ENCODE measurements at regions of chr9 and their contacts with region 1.

Region 1: DNA sequence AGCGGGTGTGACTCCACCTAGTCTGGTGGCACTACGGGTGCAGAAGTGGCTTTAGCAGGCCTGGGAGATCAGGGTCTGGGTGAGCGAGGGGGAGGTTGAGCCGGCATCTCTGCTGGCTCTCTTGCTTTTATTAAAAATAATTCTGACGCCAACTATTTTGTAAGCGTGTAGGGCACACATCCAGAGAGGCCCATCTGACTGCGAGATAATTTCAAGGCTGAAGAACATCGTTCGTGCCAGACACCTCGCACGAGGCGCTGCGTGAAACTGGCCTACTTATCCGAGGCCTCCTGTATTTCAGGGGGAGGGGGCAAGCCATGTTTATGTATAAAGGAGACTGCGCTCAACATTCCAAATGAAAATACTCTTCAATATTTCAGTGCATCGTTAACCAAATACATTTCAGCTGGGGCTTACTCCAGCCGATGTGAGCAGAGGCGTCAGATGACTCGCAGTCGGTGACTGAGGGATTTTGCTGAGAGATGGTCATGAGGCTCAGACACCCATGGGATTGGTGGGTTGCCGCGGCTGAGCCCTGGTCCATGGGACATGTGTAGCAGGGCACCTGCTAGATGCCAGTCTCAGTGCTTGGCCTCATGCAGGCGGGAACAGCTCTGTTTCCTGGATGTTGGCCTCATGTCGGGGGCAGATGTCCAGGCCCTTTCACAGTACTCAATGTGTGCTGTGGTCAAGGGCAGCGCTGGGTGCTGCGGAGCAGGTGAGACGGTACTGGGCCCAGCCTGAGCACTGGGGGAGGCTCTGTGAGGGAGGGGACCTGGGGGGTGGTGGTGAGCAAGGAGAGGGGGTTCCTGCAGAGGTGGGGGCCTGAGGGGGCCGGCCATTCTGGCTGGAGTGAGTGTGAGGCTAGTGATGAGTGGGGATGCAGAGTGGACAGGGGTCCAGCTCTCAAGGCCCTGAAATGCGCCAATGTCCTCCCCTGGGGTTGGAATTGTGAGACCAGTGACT is 201.5 kb downstream of the DAB2IP start:
- DNase-seq: peak; percentile 72 to 91 (median 88)
- ATAC-seq: peak; percentile 77 to 78
- H3K4me3 ChIP-seq: no peak overlapping the region
- H3K27ac ChIP-seq: peak overlapping the region; percentile 73
- H3K4me1 ChIP-seq: peaks cover 3% of the 10 kb centered on the region
- H3K27me3 ChIP-seq: no peaks in the 10 kb centered on the region

Region 2: GRCh38 chr9:121055642-121056143 is 797.2 kb before region 1 on chr9:
- intact Hi-C with region 1: no loop called
- DNase-seq: no peak
- ATAC-seq: no peak
- H3K4me3 ChIP-seq: no peak overlapping the region
- H3K27ac ChIP-seq: no peak overlapping the region
- H3K4me1 ChIP-seq: no peaks in the 10 kb centered on the region
- H3K27me3 ChIP-seq: no peaks in the 10 kb centered on the region

Region 3: DNA sequence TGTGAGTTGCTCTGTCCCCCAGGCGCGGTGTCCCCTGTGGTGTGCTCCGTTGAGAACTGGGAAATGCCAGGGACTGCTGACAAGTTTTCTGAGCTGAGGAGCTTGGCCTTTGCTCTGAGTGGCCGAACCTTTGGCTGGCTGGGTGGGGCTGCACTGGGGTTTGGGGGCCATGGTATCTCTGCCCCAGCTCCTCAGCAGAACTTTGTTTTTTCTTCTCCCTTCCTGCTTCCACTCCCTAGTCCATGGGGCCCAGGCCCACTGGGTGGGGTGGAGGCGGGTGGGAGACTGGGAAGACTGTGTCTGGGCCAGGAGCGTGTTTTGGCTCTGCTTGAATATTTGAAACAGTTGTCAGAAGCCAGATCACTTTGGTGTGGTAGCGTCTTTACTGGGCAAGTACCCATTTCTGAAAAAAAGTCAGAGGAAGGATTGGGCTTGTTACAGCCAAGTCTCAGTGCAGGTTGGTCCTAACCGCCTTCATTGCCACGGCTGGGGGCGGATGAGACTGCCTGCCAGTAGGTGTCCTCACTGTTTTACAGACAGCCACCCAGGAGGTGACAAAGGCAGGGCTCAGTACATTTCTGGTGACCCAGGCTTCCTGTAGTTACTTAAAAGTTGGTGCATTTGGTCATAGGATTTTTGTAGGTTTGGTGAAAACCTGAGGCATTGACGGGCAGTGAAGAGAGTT is 108.8 kb before region 1 on chr9:
- intact Hi-C with region 1: loop called in 1 of 4 experiments (anchors 10 kb)
- DNase-seq: peak; percentile 61 to 83 (median 83)
- ATAC-seq: peak; percentile 61 to 67
- H3K4me3 ChIP-seq: peak overlapping the region; percentile 73
- H3K27ac ChIP-seq: peak overlapping the region; percentile 100
- H3K4me1 ChIP-seq: peaks cover 47% of the 10 kb centered on the region
- H3K27me3 ChIP-seq: no peaks in the 10 kb centered on the region

Region 4: DNA sequence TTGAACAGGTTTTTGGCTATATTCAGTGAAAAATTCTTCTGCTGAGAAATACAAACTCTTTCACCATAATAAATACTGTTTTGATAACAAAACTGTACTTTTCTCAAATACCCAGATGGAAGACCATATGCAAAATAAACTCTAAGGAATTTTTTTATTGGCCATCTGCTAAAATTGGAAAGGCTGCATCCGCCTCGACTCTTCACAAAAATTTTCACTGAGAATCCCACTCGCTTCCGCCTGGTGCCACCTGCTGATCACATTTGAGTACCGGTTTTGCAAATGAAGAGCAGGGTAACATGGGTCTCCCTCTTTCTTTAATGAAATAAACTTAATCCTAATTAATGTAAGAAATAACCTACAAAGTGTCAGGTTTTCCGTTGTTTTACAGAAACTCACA is 163.8 kb after region 1 on chr9:
- intact Hi-C with region 1: no loop called
- DNase-seq: no peak
- ATAC-seq: no peak
- H3K4me3 ChIP-seq: no peak overlapping the region
- H3K27ac ChIP-seq: no peak overlapping the region
- H3K4me1 ChIP-seq: peaks cover 5% of the 10 kb centered on the region
- H3K27me3 ChIP-seq: no peaks in the 10 kb centered on the region

Measured in right cardiac atrium (tissue), 5 donors.